Panc1 (cell line): ENCODE measurements at regions of chr19 and their contacts with region 1.

Region 1: GRCh38 chr19:54470991-54471782 is 1.9 kb downstream of the CDC42EP5 start:
- DNase-seq: no peak
- ATAC-seq: peak; percentile 69
- H3K4me3 ChIP-seq: peak overlapping the region; percentile 37 to 59
- H3K27ac ChIP-seq: peak overlapping the region; percentile 48; the same call in 1 of the 2 replicates
- H3K4me1 ChIP-seq: peaks cover 15% of the 10 kb centered on the region
- H3K27me3 ChIP-seq: no peaks in the 10 kb centered on the region
- CTCF ChIP-seq: no peak

Region 2: GRCh38 chr19:54893406-54893805 is 422.2 kb after region 1 on chr19:
- CTCF ChIA-PET with region 1: no interaction called
- POLR2A ChIA-PET with region 1: interaction called, 16 read pairs
- in situ Hi-C with region 1: no loop called
- intact Hi-C with region 1: no loop called
- DNase-seq: no peak
- ATAC-seq: no peak
- H3K4me3 ChIP-seq: no peak overlapping the region
- H3K27ac ChIP-seq: no peak overlapping the region
- H3K4me1 ChIP-seq: no peaks in the 10 kb centered on the region; the same call in 1 of the 2 replicates
- H3K27me3 ChIP-seq: no peaks in the 10 kb centered on the region
- CTCF ChIP-seq: no peak